ENCODE measurements at regions of chr4 and their contacts with region 1.

Region 1: DNA sequence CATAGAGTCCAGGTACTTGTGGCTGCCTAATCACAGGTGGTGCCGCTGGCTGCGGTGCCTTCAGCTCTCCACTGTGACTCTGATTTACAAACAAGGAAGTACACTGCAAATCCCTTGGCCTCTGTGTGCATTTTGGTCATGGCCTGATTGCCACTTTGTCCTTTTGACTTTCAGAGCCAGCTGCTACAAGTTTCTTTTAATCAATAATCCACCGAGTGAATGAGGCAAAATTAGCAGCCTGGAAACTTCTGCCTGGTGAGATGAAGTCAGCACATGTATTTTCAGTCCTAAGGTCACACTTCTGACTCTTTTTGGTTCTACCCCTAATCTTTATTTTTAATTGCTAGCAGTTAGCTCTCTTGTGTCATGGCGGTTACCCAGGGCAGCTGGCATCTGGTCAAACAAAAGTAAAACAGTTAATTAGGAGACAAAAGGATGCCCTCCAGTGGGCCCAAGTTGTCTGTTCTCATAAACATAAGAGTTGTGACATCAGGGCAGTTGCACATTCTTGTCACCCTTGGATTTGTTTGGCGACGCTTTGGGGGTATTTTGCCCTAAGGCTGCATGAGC is 62.3 kb upstream of the LNX1 start:
- DNase-seq: peak; percentile 74
- ATAC-seq: peak; percentile 84
- H3K4me3 ChIP-seq: no peak overlapping the region
- H3K27ac ChIP-seq: peak overlapping the region; percentile 9; the same call in 1 of the 2 replicates
- H3K4me1 ChIP-seq: peaks cover 16% of the 10 kb centered on the region
- H3K27me3 ChIP-seq: no peaks in the 10 kb centered on the region
- CTCF ChIP-seq: peak; percentile 17 to 48 (median 21); a peak in 2 of 6 replicates
- EP300 ChIP-seq: peak; percentile 73 to 89; a peak in 3 of 4 replicates
- POLR2A ChIP-seq: no peak
- RAD21 ChIP-seq: peak; percentile 43; the same call in 1 of the 2 replicates

Region 2: DNA sequence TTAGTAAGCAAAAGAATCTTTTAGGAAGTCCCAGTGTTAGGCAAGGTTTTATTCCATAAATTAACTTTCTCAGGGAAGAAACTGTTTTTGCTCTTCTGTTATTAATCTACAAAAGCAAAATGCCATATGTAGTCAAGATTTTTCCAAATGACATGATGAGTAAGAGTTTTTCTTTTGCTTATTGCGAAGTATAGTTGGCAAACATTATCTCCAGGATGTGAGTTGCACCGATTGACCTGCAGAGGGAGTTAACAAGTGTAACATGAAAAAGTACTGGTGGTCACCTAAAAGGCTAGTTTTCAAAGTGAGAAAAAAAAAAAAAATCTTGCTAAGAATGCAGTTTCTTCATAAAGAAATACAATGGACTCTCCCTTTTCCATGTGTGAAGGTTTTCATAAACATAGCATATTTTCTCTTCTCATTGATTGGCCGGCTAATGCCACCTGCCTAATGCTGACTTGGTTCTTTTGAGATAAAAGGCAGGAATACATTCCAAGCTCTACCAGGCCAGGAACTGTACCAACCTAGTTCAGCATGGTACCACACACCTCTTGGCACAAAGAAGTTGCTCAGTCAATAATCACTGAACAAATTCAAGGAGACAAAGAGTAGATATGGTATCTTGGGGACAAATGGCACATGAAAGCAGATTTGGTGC is 162.5 kb before region 1 on chr4:
- CTCF ChIA-PET with region 1: interaction called, 51 read pairs
- POLR2A ChIA-PET with region 1: interaction called, 3 read pairs
- RAD21 ChIA-PET with region 1: interaction called, 20 read pairs
- SMC1A ChIA-PET with region 1: interaction called, 40 read pairs
- in situ Hi-C with region 1: no loop called
- intact Hi-C with region 1: loop called (anchors 1 kb)
- DNase-seq: no peak
- ATAC-seq: peak; percentile 89
- H3K4me3 ChIP-seq: no peak overlapping the region
- H3K27ac ChIP-seq: no peak overlapping the region
- H3K4me1 ChIP-seq: no peaks in the 10 kb centered on the region
- H3K27me3 ChIP-seq: peaks cover 0 to 3% of the 10 kb centered on the region in 2 experiments; a peak in 1 of 4 replicates
- CTCF ChIP-seq: peak; percentile 53 to 67 (median 62)
- EP300 ChIP-seq: no peak
- POLR2A ChIP-seq: no peak
- RAD21 ChIP-seq: peak; percentile 64

Region 3: GRCh38 chr4:53601251-53601764 is 52.3 kb before region 1 on chr4:
- CTCF ChIA-PET with region 1: interaction called, 14 read pairs
- POLR2A ChIA-PET with region 1: no interaction called
- RAD21 ChIA-PET with region 1: interaction called, 8 read pairs
- SMC1A ChIA-PET with region 1: interaction called, 13 read pairs
- in situ Hi-C with region 1: no loop called
- intact Hi-C with region 1: no loop called
- DNase-seq: no peak
- ATAC-seq: peak; percentile 89
- H3K4me3 ChIP-seq: no peak overlapping the region
- H3K27ac ChIP-seq: no peak overlapping the region
- H3K4me1 ChIP-seq: peaks cover 16% of the 10 kb centered on the region
- H3K27me3 ChIP-seq: no peaks in the 10 kb centered on the region
- CTCF ChIP-seq: peak; percentile 35 to 49 (median 45); a peak in 5 of 6 replicates
- EP300 ChIP-seq: no peak
- POLR2A ChIP-seq: no peak
- RAD21 ChIP-seq: peak; percentile 44

Region 4: GRCh38 chr4:53640576-53641453 is 12.8 kb before region 1 on chr4:
- CTCF ChIA-PET with region 1: interaction called, 86 read pairs
- POLR2A ChIA-PET with region 1: interaction called, 41 read pairs
- RAD21 ChIA-PET with region 1: interaction called, 145 read pairs
- SMC1A ChIA-PET with region 1: interaction called, 108 read pairs
- in situ Hi-C with region 1: no loop called
- intact Hi-C with region 1: no loop called
- DNase-seq: peak; percentile 76
- ATAC-seq: peak; percentile 89
- H3K4me3 ChIP-seq: no peak overlapping the region
- H3K27ac ChIP-seq: peak overlapping the region; percentile 68
- H3K4me1 ChIP-seq: peaks cover 19% of the 10 kb centered on the region; the same call in 1 of the 2 replicates
- H3K27me3 ChIP-seq: no peaks in the 10 kb centered on the region
- CTCF ChIP-seq: no peak
- EP300 ChIP-seq: peak in 1 of 2 experiments; percentile 27; a peak in 1 of 4 replicates
- POLR2A ChIP-seq: no peak
- RAD21 ChIP-seq: no peak

Region 5: GRCh38 chr4:53688186-53688790 is 34.7 kb after region 1 on chr4:
- CTCF ChIA-PET with region 1: interaction called, 37 read pairs
- POLR2A ChIA-PET with region 1: interaction called, 22 read pairs
- RAD21 ChIA-PET with region 1: interaction called, 30 read pairs
- SMC1A ChIA-PET with region 1: interaction called, 109 read pairs
- in situ Hi-C with region 1: no loop called
- intact Hi-C with region 1: no loop called
- DNase-seq: peak; percentile 76
- ATAC-seq: peak; percentile 88
- H3K4me3 ChIP-seq: no peak overlapping the region
- H3K27ac ChIP-seq: peak overlapping the region; percentile 1; the same call in 1 of the 2 replicates
- H3K4me1 ChIP-seq: peaks cover 4% of the 10 kb centered on the region; the same call in 1 of the 2 replicates
- H3K27me3 ChIP-seq: no peaks in the 10 kb centered on the region
- CTCF ChIP-seq: no peak
- EP300 ChIP-seq: peak in 1 of 2 experiments; percentile 49; a peak in 1 of 4 replicates
- POLR2A ChIP-seq: no peak
- RAD21 ChIP-seq: no peak

Region 6: GRCh38 chr4:53748328-53748772 is 94.8 kb after region 1 on chr4:
- CTCF ChIA-PET with region 1: interaction called, 11 read pairs
- POLR2A ChIA-PET with region 1: no interaction called
- RAD21 ChIA-PET with region 1: interaction called, 11 read pairs
- SMC1A ChIA-PET with region 1: interaction called, 5 read pairs
- in situ Hi-C with region 1: no loop called
- intact Hi-C with region 1: loop called (anchors 2 kb)
- DNase-seq: peak; percentile 96
- ATAC-seq: peak; percentile 99
- H3K4me3 ChIP-seq: no peak overlapping the region
- H3K27ac ChIP-seq: peak overlapping the region; percentile 71
- H3K4me1 ChIP-seq: peaks cover 29% of the 10 kb centered on the region
- H3K27me3 ChIP-seq: no peaks in the 10 kb centered on the region
- CTCF ChIP-seq: no peak
- EP300 ChIP-seq: peak; percentile 77 to 79; a peak in 3 of 4 replicates
- POLR2A ChIP-seq: no peak
- RAD21 ChIP-seq: peak; percentile 4; the same call in 1 of the 2 replicates

Measured in GM12878 (cell line).